A549 (cell line): ENCODE measurements at regions of chr17 and their contacts with region 1.

Region 1: DNA sequence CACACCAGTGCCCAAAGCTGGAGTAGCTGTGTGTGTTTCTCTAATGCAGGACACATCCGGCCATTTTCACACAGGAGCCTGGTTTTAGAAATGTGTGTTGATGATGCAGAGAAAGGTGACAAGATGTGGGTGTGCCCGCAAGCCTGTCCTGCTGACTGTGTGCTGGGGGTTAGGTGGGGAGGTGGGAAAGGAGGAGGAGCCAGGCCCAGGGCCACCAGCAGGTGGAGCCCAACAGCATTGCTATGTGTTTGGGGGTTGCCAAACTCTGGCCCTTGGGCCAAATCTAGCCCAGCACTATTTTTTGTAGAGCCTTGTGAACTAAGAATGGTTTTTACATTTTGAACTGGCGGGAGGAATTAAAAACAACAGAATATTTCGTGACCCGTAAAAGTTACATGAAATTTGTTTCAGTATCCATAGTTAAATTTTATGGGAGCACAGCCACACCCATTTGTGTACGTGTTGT is 61.7 kb upstream of the LGALS9 start:
- DNase-seq: peak; percentile 63 to 65
- ATAC-seq: peak; percentile 72 to 86; a peak in 5 of 6 replicates
- H3K4me3 ChIP-seq: no peak overlapping the region
- H3K27ac ChIP-seq: peak overlapping the region; percentile 21 to 87; a peak in 5 of 6 replicates
- H3K4me1 ChIP-seq: peaks cover 79% of the 10 kb centered on the region
- CTCF ChIP-seq: peak; percentile 68
- EP300 ChIP-seq: no peak
- POLR2A ChIP-seq: no peak
- RAD21 ChIP-seq: peak; percentile 45 to 52

Region 2: DNA sequence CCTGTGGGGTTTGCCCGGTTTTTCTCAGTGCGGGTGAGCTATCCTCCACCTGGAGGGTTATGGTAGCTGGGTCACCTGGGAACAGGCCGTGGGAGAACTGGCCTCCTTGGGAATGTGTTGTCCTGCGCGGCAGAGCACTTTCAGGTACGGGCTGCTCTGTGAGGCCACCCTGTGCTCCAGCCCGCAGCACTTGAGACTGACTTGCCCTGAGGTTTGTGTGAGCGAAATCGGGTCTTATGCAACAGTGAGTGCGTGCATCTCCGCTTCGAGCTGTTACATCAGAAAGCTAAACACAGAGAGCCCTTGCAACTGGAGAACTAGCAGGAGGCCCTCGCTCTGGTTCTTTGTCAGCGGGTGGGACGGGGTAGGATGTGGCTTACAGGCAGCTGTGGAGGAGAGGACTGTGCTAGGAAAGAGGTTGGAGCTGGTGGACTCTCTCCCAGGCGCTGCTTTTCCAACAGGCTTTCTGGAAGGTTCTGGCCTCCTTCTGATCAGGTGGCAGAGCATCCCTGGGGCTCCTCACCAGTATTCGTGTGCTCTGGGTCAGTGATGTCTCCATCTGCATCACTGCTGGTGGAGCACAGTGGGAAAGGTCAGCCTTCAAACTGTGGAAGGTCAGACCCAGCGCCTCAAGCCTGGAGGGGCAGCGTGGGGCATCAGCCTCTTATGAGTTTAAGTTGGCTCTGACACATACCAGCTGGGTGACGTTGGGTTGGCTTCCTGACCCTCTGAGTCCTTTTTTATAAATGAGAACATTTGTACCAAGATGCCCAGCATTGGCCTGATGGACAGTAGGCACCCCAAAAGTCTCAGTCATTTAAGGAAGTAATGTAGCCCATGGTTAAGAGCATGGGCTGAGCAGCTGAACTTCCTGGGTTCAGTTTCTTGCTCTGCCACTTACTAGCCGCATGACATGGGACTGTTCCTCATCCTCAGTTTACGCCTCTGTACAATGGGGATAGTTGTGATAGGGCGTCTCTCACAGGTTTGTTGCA is 36.7 kb before region 1 on chr17:
- CTCF ChIA-PET with region 1: interaction called, 15 read pairs
- POLR2A ChIA-PET with region 1: no interaction called
- DNase-seq: no peak
- ATAC-seq: no peak
- H3K4me3 ChIP-seq: no peak overlapping the region
- H3K27ac ChIP-seq: peak overlapping the region; percentile 70 to 84
- H3K4me1 ChIP-seq: peaks cover 95% of the 10 kb centered on the region
- CTCF ChIP-seq: no peak
- EP300 ChIP-seq: no peak
- POLR2A ChIP-seq: no peak
- RAD21 ChIP-seq: no peak

Region 3: DNA sequence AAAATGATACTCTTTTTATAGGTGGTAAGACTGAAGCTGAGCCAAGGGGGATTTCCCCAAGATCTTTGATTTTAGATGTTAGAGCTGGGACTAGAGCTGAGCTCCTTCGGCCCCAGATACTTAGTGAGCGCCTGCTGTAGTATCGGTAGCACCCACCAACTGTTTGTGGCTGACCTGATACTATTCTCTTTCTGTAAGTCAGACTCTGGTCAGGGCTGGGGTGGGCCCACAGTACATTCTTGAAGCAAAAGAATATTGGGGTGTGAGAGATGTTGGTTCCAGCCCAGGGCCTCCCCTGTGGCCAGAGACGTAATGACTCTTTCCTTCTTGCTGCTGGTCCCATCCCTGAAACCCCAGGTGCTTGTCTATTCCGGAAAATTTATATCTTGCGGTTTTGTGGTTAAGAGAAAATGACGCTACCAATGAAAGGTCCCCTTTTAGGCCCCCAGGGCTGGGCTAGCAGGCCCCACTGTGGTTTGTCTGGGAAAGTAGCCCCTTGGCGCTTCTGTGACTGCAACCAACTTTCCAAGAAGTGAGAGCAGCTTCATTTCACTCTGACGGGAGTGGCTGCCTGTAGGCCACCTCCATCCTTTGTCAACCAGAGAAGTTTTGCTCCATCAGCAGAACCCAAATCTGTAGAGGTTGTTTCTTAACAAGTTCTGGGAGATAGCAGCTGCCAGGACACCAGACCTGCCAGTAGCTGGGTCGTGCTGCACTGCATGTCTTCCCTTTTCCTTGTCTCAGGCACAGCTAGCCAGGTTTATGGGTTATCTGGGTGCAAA is 24.7 kb before region 1 on chr17:
- CTCF ChIA-PET with region 1: interaction called, 10 read pairs
- POLR2A ChIA-PET with region 1: no interaction called
- DNase-seq: no peak
- ATAC-seq: no peak
- H3K4me3 ChIP-seq: no peak overlapping the region
- H3K27ac ChIP-seq: peak overlapping the region; percentile 81 to 97
- H3K4me1 ChIP-seq: peaks cover 87% of the 10 kb centered on the region
- CTCF ChIP-seq: no peak
- EP300 ChIP-seq: no peak
- POLR2A ChIP-seq: no peak
- RAD21 ChIP-seq: no peak

Region 4: DNA sequence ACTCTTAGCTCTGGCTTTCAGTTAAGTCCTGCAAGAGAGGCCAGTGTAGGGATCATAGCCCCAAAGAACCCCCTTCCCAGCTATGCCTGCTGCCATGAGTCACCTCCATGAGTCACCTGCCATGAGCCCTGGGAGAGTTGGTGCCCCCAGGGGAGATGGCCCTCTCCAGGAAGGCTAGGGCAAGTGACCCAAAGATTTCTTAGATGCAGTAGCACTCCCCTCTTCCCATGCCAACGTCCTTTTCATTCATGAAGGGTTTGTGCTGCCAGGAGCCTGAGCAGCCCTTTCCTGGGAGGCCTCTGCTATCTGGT is 16.9 kb before region 1 on chr17:
- CTCF ChIA-PET with region 1: interaction called, 35 read pairs
- POLR2A ChIA-PET with region 1: no interaction called
- DNase-seq: peak; percentile 91 to 95
- ATAC-seq: peak; percentile 85 to 88
- H3K4me3 ChIP-seq: 0 out of 3 replicates have a peak overlapping the region, but pooled peaks have one; percentile 10
- H3K27ac ChIP-seq: peak overlapping the region; percentile 91 to 97
- H3K4me1 ChIP-seq: peaks cover 68% of the 10 kb centered on the region
- CTCF ChIP-seq: no peak
- EP300 ChIP-seq: peak; percentile 3 to 35; a peak in 1 of 5 replicates
- POLR2A ChIP-seq: no peak
- RAD21 ChIP-seq: peak in 1 of 2 experiments; percentile 43; a peak in 2 of 5 replicates

Region 5: GRCh38 chr17:27585153-27585681 is 15.9 kb after region 1 on chr17:
- CTCF ChIA-PET with region 1: interaction called, 523 read pairs
- POLR2A ChIA-PET with region 1: no interaction called
- DNase-seq: no peak
- ATAC-seq: no peak
- H3K4me3 ChIP-seq: no peak overlapping the region
- H3K27ac ChIP-seq: peak overlapping the region; percentile 37 to 74; a peak in 5 of 6 replicates
- H3K4me1 ChIP-seq: peaks cover 27% of the 10 kb centered on the region
- CTCF ChIP-seq: no peak
- EP300 ChIP-seq: no peak
- POLR2A ChIP-seq: no peak
- RAD21 ChIP-seq: no peak